ENCODE measurements at regions of chr10 and their contacts with region 1.

Region 1: GRCh38 chr10:49407552-49408137 is 11.8 kb upstream of the DRGX start:
- DNase-seq: peak; percentile 80 to 85 (median 82)
- ATAC-seq: peak; percentile 89 to 97 (median 92)
- H3K4me3 ChIP-seq: no peak overlapping the region
- H3K27ac ChIP-seq: no peak overlapping the region
- H3K4me1 ChIP-seq: no peaks in the 10 kb centered on the region
- H3K27me3 ChIP-seq: no peaks in the 10 kb centered on the region
- CTCF ChIP-seq: peak; percentile 87 to 93 (median 92)
- POLR2A ChIP-seq: no peak

Region 2: DNA sequence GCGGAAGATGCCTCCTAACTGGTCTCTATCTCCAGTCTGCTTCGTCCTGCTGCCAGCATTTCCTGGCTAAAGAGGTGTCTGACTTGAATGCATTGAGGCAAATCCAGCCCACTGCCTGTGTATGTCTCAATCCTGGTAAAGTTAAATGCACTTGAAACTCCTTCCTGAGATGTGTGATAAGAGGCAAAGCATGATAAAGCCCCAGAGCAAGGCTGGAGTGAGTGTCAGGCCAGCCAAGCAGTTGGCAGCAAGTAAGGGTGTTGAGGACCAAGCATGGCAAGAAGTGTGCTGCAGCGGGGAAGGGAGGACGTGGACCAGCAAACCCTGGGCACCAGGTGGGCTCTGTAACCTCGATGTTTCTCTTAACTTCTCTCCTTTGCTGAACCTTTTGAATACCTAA is 497.1 kb before region 1 on chr10:
- intact Hi-C with region 1: no loop called
- DNase-seq: no peak
- ATAC-seq: no peak
- H3K4me3 ChIP-seq: no peak overlapping the region
- H3K27ac ChIP-seq: no peak overlapping the region
- H3K4me1 ChIP-seq: no peaks in the 10 kb centered on the region
- H3K27me3 ChIP-seq: no peaks in the 10 kb centered on the region
- CTCF ChIP-seq: no peak
- POLR2A ChIP-seq: no peak

Region 3: DNA sequence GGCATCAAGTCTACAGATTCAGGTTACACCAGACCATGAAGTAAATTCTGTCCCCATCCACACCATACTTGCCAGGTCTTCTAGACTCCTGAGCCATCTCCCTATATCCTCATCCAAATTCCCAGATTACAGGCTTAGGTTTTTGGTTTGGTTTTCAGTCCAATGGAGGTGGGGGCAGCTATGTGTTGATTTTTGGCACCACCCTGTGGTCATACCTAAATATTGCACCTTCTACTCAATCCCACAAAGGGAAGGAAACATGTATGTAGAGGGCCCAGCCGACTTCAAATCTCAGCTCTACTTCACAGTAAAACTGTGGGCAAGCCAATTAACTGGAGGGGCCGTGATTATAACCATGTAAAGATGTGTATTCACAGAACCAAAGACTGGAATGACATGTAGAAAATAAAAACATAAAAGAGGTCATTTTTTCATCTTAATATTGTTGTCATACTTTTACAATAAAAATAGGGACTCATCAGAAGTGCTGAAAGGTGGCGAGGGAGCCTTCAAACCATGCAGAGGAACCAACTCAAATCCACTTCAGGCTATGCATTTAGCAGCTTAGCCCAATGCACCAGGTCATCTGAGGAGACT is 111.4 kb after region 1 on chr10:
- intact Hi-C with region 1: loop called (anchors 10 kb)
- DNase-seq: no peak
- ATAC-seq: peak; percentile 78 to 85 (median 84)
- H3K4me3 ChIP-seq: no peak overlapping the region
- H3K27ac ChIP-seq: no peak overlapping the region
- H3K4me1 ChIP-seq: peaks cover 0 to 6% (median 0%) of the 10 kb centered on the region in 4 donors
- H3K27me3 ChIP-seq: no peaks in the 10 kb centered on the region
- CTCF ChIP-seq: peak; percentile 59 to 62 (median 60)
- POLR2A ChIP-seq: no peak